Uterus (tissue), 4 donors: ENCODE measurements at regions of chr19 and their contacts with region 1.

Region 1: DNA sequence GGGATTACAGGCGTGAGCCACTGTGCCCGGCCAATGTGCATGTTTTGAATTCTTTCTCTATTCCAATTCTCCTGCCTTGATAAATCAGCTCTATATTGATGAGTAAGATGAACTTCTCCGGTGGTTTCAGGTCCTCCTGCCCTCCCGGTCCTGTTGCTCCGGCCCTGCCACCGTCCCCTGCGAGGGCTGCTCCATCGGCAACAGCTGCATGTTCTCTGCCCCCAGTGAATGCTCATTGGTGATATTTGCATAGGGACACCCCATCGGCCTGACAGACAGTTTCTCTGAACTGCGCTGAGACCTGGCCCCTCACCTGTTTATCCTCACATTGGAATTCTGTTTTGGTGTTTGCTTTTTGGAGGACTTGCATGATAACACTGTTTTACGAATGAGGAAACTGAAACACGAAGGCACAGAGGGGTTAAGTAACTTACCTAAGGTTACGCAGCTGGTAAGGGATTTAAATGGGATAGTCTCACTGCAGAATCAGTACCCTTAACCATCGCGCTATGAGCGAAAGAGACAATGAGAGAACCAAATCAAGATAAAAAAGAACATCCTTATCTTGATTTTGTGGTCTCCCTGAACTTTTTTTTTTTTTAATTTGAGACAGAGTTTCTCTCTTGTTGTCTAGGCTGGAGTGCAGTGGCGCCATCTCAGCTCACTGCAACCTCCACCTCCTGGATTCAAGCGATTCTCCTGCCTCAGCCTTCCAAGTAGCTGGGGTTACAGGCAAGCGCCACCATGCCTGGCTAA is 32.2 kb downstream of the ZNF557 start:
- DNase-seq: no peak
- H3K4me3 ChIP-seq: no peak overlapping the region
- H3K27ac ChIP-seq: no peak overlapping the region
- H3K4me1 ChIP-seq: no peaks in the 10 kb centered on the region
- H3K27me3 ChIP-seq: no peaks in the 10 kb centered on the region
- CTCF ChIP-seq: no peak
- POLR2A ChIP-seq: no peak

Region 2: DNA sequence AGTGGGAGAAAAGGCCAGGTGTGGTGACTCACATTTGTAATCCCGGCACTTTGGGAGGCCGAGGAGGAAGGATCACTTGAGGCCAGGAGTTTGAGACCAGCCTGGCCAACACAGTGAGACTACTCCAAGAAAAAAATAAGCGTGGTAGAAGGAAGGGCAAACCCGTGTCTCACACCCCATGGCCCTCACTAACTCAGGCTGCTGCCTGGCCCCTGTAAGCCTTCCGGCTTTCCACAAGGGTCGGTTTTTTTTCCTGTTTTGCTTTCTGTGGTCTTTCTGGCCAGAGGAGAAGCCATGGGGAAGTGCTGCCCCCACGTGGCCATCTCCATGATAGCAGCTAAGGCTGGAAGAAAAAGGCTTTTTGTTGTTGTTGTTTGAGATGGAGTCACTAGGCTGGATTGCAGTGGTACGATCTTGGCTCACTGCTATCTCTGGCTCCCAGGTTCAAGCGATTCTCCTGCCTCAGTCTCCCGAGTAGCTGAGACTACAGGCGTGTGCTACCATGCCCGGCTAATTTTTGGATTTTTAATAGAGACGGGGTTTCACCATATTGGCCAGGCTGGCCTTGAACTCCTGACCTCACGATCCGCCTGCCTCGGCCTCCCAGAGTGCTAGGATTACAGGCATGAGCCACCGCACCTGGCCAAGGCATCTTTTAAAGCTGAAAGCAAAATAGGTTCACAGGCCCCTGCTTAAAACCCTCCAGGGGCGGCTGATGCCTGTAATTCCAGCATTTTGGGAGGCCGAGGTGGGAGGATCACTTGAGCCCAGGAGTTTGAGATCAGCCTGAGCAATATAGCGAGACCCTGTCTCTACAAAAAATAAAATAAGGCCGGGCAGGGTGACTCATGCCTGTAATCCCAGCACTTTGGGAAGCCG is 239.5 kb after region 1 on chr19:
- intact Hi-C with region 1: loop called (anchors 2 kb)
- DNase-seq: peak; percentile 85 to 87
- H3K4me3 ChIP-seq: no peak overlapping the region
- H3K27ac ChIP-seq: peak overlapping the region; percentile 27 to 36
- H3K4me1 ChIP-seq: no peaks in the 10 kb centered on the region
- H3K27me3 ChIP-seq: no peaks in the 10 kb centered on the region
- CTCF ChIP-seq: peak; percentile 94 to 97 (median 96)
- POLR2A ChIP-seq: no peak